PC-9 (cell line): ENCODE measurements at regions of chr6 and their contacts with region 1.

Region 1: GRCh38 chr6:159789377-159790148 is at the start of gene TCP1:
- DNase-seq: peak; percentile 95 to 97
- H3K4me3 ChIP-seq: peak within 1 kb of the TSS; percentile 86
- H3K27ac ChIP-seq: peak within 1 kb of the TSS; percentile 82
- H3K4me1 ChIP-seq: peaks cover 25% of the 10 kb centered on the region
- H3K27me3 ChIP-seq: no peaks in the 10 kb centered on the region
- CTCF ChIP-seq: no peak
- total RNA-seq, gene TCP1: 159 and 166 TPM in 2 replicates

Region 2: GRCh38 chr6:159726918-159727716 is 62.4 kb before region 1 on chr6 and contains the start of gene WTAP:
- CTCF ChIA-PET with region 1: no interaction called
- POLR2A ChIA-PET with region 1: interaction called, 3 read pairs
- intact Hi-C with region 1: loop called (anchors 2 kb)
- DNase-seq: peak; percentile 87 to 90
- H3K4me3 ChIP-seq: peak within 1 kb of the TSS; percentile 69
- H3K27ac ChIP-seq: peak within 1 kb of the TSS; percentile 91
- H3K4me1 ChIP-seq: peaks cover 17% of the 10 kb centered on the region
- H3K27me3 ChIP-seq: no peaks in the 10 kb centered on the region
- CTCF ChIP-seq: no peak
- total RNA-seq, gene WTAP: 44.7 and 46.5 TPM in 2 replicates

Region 3: GRCh38 chr6:159761873-159762680 is 27.5 kb before region 1 on chr6 and contains the start of gene ACAT2:
- CTCF ChIA-PET with region 1: no interaction called
- POLR2A ChIA-PET with region 1: interaction called, 3 read pairs
- intact Hi-C with region 1: loop called (anchors 2 kb)
- DNase-seq: peak; percentile 87 to 89
- H3K4me3 ChIP-seq: peak within 1 kb of the TSS; percentile 98
- H3K27ac ChIP-seq: peak within 1 kb of the TSS; percentile 79
- H3K4me1 ChIP-seq: peaks cover 14% of the 10 kb centered on the region
- H3K27me3 ChIP-seq: no peaks in the 10 kb centered on the region
- CTCF ChIP-seq: no peak
- total RNA-seq, gene ACAT2: 48.5 and 71.0 TPM in 2 replicates

Region 4: DNA sequence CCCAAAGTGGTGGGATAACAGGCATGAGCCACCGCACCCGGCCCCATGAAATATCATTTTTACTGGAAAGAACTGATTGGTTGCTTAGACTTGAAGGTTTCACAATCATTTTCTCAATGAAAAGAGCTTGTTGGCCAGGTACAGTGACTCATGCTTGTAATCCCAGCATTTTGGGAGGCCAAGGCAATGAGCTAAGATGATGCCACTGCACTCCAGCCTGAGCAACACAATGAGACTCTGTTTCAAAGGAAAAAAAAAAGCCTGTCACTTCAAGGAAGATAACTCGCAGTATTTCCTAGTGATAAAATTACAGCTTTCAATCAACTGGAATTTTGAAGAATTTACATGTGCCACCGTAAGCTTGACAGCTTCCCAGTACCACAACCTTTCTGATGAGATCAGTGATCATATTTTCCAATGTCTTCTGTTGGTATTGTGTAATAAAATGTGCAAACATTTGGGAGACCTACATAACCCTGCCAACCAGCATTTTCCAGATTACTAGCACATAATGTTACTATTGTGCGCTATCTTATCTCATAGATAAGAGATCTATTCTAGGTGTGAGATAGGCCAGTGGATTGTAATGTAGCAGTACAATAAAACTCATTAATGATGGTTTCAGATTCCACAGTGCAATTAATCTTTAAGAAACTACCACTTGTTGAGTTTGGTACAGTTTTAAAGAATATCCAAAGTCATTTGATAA is 17.7 kb after region 1 on chr6:
- CTCF ChIA-PET with region 1: interaction called, 4 read pairs
- POLR2A ChIA-PET with region 1: interaction called, 10 read pairs
- intact Hi-C with region 1: no loop called
- DNase-seq: peak; percentile 18 to 85
- H3K4me3 ChIP-seq: no peak overlapping the region
- H3K27ac ChIP-seq: peak overlapping the region; percentile 46
- H3K4me1 ChIP-seq: peaks cover 10% of the 10 kb centered on the region
- H3K27me3 ChIP-seq: no peaks in the 10 kb centered on the region
- CTCF ChIP-seq: no peak

Region 5: GRCh38 chr6:159919011-159919511 is 129.5 kb after region 1 on chr6:
- CTCF ChIA-PET with region 1: no interaction called
- POLR2A ChIA-PET with region 1: no interaction called
- intact Hi-C with region 1: no loop called
- DNase-seq: no peak
- H3K4me3 ChIP-seq: no peak overlapping the region
- H3K27ac ChIP-seq: no peak overlapping the region
- H3K4me1 ChIP-seq: no peaks in the 10 kb centered on the region
- H3K27me3 ChIP-seq: peaks cover 45% of the 10 kb centered on the region
- CTCF ChIP-seq: no peak

Region 6: GRCh38 chr6:159969921-159970320 is 180.4 kb after region 1 on chr6:
- CTCF ChIA-PET with region 1: no interaction called
- POLR2A ChIA-PET with region 1: no interaction called
- intact Hi-C with region 1: loop called (anchors 10 kb)
- DNase-seq: peak; percentile 24 to 39
- H3K4me3 ChIP-seq: peak overlapping the region; percentile 82
- H3K27ac ChIP-seq: no peak overlapping the region
- H3K4me1 ChIP-seq: peaks cover 32% of the 10 kb centered on the region
- H3K27me3 ChIP-seq: no peaks in the 10 kb centered on the region; the same call in 1 of the 2 replicates
- CTCF ChIP-seq: no peak